ENCODE measurements at regions of chr6 and their contacts with region 1.

Region 1: GRCh38 chr6:110682460-110682853 is 132.8 kb downstream of the CDK19 start:
- DNase-seq: peak; percentile 51 to 81
- H3K4me3 ChIP-seq: no peak overlapping the region
- H3K27ac ChIP-seq: no peak overlapping the region
- H3K4me1 ChIP-seq: peaks cover 4% of the 10 kb centered on the region; the same call in 1 of the 2 replicates
- H3K27me3 ChIP-seq: no peaks in the 10 kb centered on the region
- CTCF ChIP-seq: peak; percentile 91

Region 2: GRCh38 chr6:110398778-110399177 is 283.7 kb before region 1 on chr6:
- CTCF ChIA-PET with region 1: no interaction called
- POLR2A ChIA-PET with region 1: no interaction called
- intact Hi-C with region 1: no loop called
- DNase-seq: peak in 1 of 2 experiments; percentile 6
- H3K4me3 ChIP-seq: no peak overlapping the region
- H3K27ac ChIP-seq: no peak overlapping the region
- H3K4me1 ChIP-seq: no peaks in the 10 kb centered on the region
- H3K27me3 ChIP-seq: no peaks in the 10 kb centered on the region
- CTCF ChIP-seq: no peak

Region 3: GRCh38 chr6:110873981-110874879 is 191.8 kb after region 1 on chr6 and contains the start of gene AMD1:
- CTCF ChIA-PET with region 1: interaction called, 4 read pairs
- POLR2A ChIA-PET with region 1: interaction called, 8 read pairs
- intact Hi-C with region 1: loop called (anchors 2 kb)
- DNase-seq: peak; percentile 93 to 95
- H3K4me3 ChIP-seq: peak within 1 kb of the TSS; percentile 90
- H3K27ac ChIP-seq: peak within 1 kb of the TSS; percentile 73
- H3K4me1 ChIP-seq: peaks cover 36% of the 10 kb centered on the region
- H3K27me3 ChIP-seq: no peaks in the 10 kb centered on the region
- CTCF ChIP-seq: no peak
- total RNA-seq, gene AMD1: 40.1 and 46.4 TPM in 2 replicates

Region 4: DNA sequence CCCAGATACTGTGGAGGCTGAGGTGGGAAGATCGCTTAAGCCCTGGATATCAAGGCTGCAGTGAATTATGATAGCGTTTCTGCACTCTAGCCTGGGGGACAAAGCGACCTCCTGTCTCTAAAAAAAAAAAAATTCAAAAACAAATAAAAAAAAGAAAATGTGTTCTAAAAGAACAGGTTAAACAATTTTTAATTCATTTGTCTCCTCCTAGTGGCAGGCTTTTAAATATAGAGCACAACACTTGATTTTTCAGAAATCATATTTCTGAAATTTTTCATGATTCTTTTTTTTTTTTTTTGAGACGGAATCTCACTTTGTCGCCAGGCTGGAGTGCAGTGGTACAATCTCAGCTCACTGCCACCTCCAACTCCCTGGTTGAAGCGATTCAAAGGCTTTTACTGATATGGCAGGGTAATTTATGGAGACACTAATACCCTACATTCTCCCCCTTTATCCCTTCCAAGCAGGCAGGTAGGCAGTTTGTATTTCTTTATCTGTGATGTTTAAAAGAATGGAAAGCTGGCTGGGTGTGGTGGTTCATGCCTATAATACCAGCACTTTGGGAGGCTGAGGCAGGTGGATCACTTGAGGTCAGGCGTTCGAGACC is 267.3 kb after region 1 on chr6:
- CTCF ChIA-PET with region 1: interaction called, 8 read pairs
- POLR2A ChIA-PET with region 1: no interaction called
- intact Hi-C with region 1: loop called (anchors 1 kb)
- DNase-seq: peak; percentile 5 to 56
- H3K4me3 ChIP-seq: no peak overlapping the region
- H3K27ac ChIP-seq: no peak overlapping the region
- H3K4me1 ChIP-seq: peaks cover 30% of the 10 kb centered on the region
- H3K27me3 ChIP-seq: no peaks in the 10 kb centered on the region
- CTCF ChIP-seq: peak; percentile 84

Region 5: DNA sequence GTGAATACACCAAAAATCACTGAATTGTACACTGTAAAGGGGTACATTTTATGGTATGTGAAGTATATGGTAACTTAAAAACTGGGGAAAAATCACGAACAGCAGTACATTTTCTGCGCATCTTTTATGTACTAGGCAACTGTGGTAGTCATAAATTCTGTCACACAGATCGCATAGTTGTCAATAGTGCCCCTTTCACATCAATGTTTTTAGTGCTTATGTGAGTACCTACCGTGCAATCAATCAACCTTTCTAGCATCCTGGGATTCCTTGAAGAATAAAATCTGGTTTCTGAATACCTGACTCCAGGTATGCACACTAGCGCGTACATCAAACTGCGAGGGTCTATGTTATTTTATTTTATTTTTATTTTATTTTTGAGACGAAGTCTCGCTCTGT is 298.7 kb after region 1 on chr6:
- CTCF ChIA-PET with region 1: interaction called, 5 read pairs
- POLR2A ChIA-PET with region 1: no interaction called
- intact Hi-C with region 1: loop called (anchors 1 kb)
- DNase-seq: no peak
- H3K4me3 ChIP-seq: peak overlapping the region; percentile 87
- H3K27ac ChIP-seq: peak overlapping the region; percentile 95
- H3K4me1 ChIP-seq: peaks cover 9% of the 10 kb centered on the region; the same call in 1 of the 2 replicates
- H3K27me3 ChIP-seq: no peaks in the 10 kb centered on the region
- CTCF ChIP-seq: no peak

Region 6: DNA sequence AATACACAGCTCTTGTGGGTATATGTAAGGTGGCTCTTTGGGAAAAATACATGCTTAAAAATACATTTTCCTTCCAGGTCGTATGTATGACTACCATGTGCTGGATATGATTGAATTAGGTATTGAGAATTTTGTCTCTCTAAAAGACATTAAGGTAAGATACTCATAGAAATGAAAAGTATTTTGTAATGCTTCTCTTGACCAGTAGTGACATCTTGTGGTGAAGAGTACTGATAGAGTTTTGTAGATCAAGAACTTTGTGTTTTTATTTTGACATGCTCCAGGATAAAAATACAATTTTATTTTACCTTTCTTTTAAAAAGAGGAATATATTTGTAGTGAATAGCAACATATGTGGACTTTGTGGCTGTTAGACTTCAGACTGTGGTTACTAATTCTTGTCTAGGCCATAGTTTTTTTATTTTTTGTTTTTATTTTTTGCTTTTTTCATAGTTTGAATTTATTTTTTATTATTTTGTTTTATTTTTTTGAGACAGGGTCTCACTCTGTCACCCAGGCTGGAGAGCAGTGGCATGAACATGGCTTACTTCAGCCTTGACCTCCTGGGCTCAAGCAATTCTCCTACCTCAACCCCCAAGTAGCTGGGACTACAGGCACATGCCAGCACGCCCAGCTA is 317.3 kb after region 1 on chr6:
- CTCF ChIA-PET with region 1: no interaction called
- POLR2A ChIA-PET with region 1: no interaction called
- intact Hi-C with region 1: loop called (anchors 1 kb)
- DNase-seq: peak in 1 of 2 experiments; percentile 42
- H3K4me3 ChIP-seq: no peak overlapping the region
- H3K27ac ChIP-seq: no peak overlapping the region
- H3K4me1 ChIP-seq: no peaks in the 10 kb centered on the region
- H3K27me3 ChIP-seq: no peaks in the 10 kb centered on the region
- CTCF ChIP-seq: peak; percentile 78

Measured in PC-9 (cell line).